ENCODE measurements at regions of chr2 and their contacts with region 1.

Region 1: GRCh38 chr2:167192833-167193232 is 304.6 kb downstream of the XIRP2 start:
- DNase-seq: peak; percentile 64
- H3K4me3 ChIP-seq: no peak overlapping the region
- H3K27me3 ChIP-seq: no peaks in the 10 kb centered on the region
- CTCF ChIP-seq: no peak

Region 2: GRCh38 chr2:167181134-167181533 is 11.7 kb before region 1 on chr2:
- CTCF ChIA-PET with region 1: no interaction called
- POLR2A ChIA-PET with region 1: interaction called, 15 read pairs
- DNase-seq: peak; percentile 25
- H3K4me3 ChIP-seq: no peak overlapping the region
- H3K27me3 ChIP-seq: no peaks in the 10 kb centered on the region
- CTCF ChIP-seq: no peak

Measured in BJ (cell line).